Left ventricle myocardium inferior (tissue), 1 donor: ENCODE measurements at regions of chr15 and their contacts with region 1.

Region 1: DNA sequence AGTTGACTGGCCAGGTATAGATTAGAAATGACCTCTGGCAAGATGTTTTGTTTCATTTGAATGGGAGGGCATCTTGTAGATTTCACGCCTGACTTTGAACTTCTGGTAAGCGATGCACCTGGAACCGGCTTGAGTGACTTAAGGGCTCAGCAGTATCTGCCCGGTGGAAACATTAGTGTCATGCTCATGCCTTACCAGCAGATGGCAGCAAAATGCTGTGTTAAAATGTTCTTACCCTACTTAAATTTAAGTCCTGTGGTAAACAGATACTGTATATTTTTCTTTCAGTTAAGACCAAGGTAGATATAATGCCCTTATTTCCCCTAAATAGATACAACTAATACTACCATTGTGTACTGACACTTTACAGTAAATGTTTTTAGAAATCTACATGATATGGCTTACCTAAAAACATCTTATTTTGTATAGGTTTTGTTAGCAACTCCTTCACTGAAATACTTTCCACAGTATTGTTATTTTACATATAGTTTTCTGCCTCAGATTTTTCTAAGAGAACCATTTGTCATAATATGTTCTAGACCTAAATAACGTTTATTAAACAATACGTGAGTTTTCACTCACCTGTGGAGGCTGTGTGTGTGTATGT is 25.5 kb downstream of the ASB7 start:
- DNase-seq: peak; percentile 24
- H3K4me3 ChIP-seq: no peak overlapping the region
- H3K27ac ChIP-seq: no peak overlapping the region
- H3K4me1 ChIP-seq: peaks cover 18% of the 10 kb centered on the region
- H3K27me3 ChIP-seq: no peaks in the 10 kb centered on the region
- CTCF ChIP-seq: peak; percentile 90

Region 2: DNA sequence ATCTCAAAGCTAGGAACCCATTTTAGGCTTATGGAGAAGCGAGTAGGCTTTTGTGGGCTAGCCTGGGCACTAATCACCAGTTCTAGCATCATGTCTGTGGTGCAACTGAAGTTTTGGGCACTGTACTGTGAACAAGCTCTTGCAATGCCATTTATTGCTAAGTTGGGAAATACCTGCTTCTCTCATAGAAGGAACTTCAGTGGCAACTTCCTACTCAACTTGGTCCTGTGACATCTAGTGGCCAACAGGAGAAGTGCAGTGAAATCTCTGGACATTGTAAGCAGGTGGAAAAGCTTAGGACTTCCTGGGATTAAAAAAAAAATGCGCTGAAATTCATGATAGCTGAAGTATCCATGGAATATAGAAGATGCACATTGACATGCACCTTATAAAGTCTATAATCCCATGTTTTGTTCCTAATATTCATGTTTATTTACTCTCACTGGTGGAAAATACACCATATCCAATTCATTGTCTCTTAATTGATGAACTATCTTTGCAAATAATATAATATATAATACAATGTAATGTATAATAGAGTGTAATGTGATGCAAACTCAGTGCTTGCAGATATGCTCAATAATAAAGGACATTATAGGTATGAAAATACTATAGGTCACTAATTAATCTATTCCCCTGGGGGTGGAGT is 245.3 kb after region 1 on chr15:
- intact Hi-C with region 1: loop called (anchors 2 kb)
- DNase-seq: no peak
- H3K4me3 ChIP-seq: no peak overlapping the region
- H3K27ac ChIP-seq: no peak overlapping the region
- H3K4me1 ChIP-seq: no peaks in the 10 kb centered on the region
- H3K27me3 ChIP-seq: peaks cover 72% of the 10 kb centered on the region
- CTCF ChIP-seq: peak; percentile 92

Region 3: DNA sequence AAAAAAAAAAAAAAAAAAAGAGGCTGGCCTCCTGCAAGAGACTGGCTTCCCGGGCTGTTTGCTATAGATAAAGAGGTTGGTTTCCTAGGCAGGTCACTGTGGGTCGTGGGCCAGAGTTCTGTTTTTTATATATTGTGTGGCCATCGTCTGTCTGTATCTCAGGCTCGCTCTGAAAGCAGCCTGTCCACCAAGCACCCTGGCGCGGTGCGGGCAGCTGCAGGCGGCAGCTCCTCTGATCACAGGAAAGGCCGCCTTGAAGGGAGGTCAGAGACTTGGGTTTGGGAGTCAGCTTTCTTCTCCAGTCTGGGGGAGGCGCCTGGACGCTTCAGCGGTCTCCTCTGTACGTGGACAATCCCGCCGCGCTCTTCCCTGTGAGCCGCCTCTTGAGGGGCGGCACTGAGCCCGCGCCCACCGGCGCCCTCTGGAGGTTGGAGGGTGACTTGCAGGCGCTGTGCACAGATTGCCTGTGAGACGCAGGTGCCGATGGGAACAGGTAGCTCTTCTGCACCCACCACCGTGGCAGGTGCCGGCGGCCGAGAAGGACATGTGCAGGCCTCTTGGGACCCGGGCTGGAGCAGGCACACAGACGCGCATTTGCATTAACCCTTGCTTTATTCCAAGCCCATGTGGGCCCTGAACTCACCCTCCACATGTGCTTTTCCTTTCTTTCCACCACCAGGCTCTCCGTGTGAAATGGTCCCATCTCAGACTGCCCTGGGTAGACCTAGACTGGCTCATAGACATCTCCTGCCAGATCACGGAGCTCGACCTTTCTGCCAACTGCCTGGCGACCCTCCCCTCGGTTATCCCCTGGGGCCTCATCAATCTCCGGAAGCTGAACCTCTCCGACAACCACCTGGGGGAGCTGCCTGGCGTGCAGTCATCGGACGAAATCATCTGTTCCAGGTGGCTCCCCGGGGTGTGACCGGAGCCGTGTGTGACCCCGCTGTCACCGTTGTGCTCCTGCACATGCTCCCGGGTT is 380.6 kb after region 1 on chr15:
- intact Hi-C with region 1: loop called (anchors 5 kb)
- DNase-seq: peak; percentile 78
- H3K4me3 ChIP-seq: peak overlapping the region; percentile 69
- H3K27ac ChIP-seq: no peak overlapping the region
- H3K4me1 ChIP-seq: peaks cover 22% of the 10 kb centered on the region
- H3K27me3 ChIP-seq: no peaks in the 10 kb centered on the region
- CTCF ChIP-seq: peak; percentile 98